Spleen (tissue), 13 donors: ENCODE measurements at regions of chr12 and their contacts with region 1.

Region 1: GRCh38 chr12:6752921-6753771 is at the start of gene MLF2:
- DNase-seq: peak; percentile 99
- H3K4me3 ChIP-seq: peak within 1 kb of the TSS; percentile 57 to 90 (median 65)
- H3K27ac ChIP-seq: peak within 1 kb of the TSS; percentile 96 to 99 (median 98)
- H3K4me1 ChIP-seq: peaks cover 16 to 37% (median 25%) of the 10 kb centered on the region in 6 donors
- H3K27me3 ChIP-seq: no peaks in the 10 kb centered on the region
- CTCF ChIP-seq: peak; percentile 97 to 100 (median 98)
- POLR2A ChIP-seq: peak in 2 of 3 donors; percentile 62 to 81
- total RNA-seq, gene MLF2: 85.4 to 123 (median 104) TPM

Region 2: GRCh38 chr12:6825398-6826124 is 72.4 kb after region 1 on chr12:
- intact Hi-C with region 1: loop called (anchors 10 kb)
- DNase-seq: peak; percentile 93
- H3K4me3 ChIP-seq: peak overlapping the region in 1 of 8 donors; percentile 5
- H3K27ac ChIP-seq: no peak overlapping the region
- H3K4me1 ChIP-seq: peaks cover 4 to 71% (median 58%) of the 10 kb centered on the region in 6 donors
- H3K27me3 ChIP-seq: peaks cover 0 to 100% (median 55%) of the 10 kb centered on the region in 7 donors
- CTCF ChIP-seq: peak; percentile 87 to 98 (median 94)
- POLR2A ChIP-seq: no peak